CD8-positive, alpha-beta T cell (primary cell): ENCODE measurements at regions of chr20 and their contacts with region 1.

Region 1: GRCh38 chr20:43666376-43667328 is at the start of gene MYBL2:
- DNase-seq: peak; percentile 49 to 82 (median 66)
- ATAC-seq: peak; percentile 97
- H3K4me3 ChIP-seq: peak within 1 kb of the TSS; percentile 32 to 58
- H3K4me3 Mint-ChIP-seq: peak within 1 kb of the TSS; percentile 54
- H3K27ac ChIP-seq: no peak within 1 kb of the TSS
- H3K27ac Mint-ChIP-seq: no peak within 1 kb of the TSS
- H3K4me1 ChIP-seq: peaks cover 8% of the 10 kb centered on the region
- H3K4me1 Mint-ChIP-seq: peaks cover 2% of the 10 kb centered on the region
- H3K27me3 ChIP-seq: peaks cover 10 to 16% of the 10 kb centered on the region in 2 experiments
- H3K27me3 Mint-ChIP-seq: peaks cover 22% of the 10 kb centered on the region
- CTCF ChIP-seq: no peak
- total RNA-seq, gene MYBL2: 0.49 to 1.1 TPM

Region 2: GRCh38 chr20:43456809-43457639 is 209.6 kb before region 1 on chr20:
- CTCF ChIA-PET with region 1: no interaction called
- POLR2A ChIA-PET with region 1: no interaction called
- intact Hi-C with region 1: loop called (anchors 1 to 2 kb)
- DNase-seq: peak; percentile 68 to 94 (median 87)
- ATAC-seq: peak; percentile 79
- H3K4me3 ChIP-seq: peak overlapping the region; percentile 97 to 100
- H3K4me3 Mint-ChIP-seq: peak overlapping the region; percentile 92
- H3K27ac ChIP-seq: peak overlapping the region; percentile 98 to 100
- H3K27ac Mint-ChIP-seq: peak overlapping the region; percentile 98
- H3K4me1 ChIP-seq: peaks cover 16% of the 10 kb centered on the region
- H3K4me1 Mint-ChIP-seq: peaks cover 36% of the 10 kb centered on the region
- H3K27me3 ChIP-seq: no peaks in the 10 kb centered on the region
- H3K27me3 Mint-ChIP-seq: peaks cover 8% of the 10 kb centered on the region
- CTCF ChIP-seq: no peak

Region 3: DNA sequence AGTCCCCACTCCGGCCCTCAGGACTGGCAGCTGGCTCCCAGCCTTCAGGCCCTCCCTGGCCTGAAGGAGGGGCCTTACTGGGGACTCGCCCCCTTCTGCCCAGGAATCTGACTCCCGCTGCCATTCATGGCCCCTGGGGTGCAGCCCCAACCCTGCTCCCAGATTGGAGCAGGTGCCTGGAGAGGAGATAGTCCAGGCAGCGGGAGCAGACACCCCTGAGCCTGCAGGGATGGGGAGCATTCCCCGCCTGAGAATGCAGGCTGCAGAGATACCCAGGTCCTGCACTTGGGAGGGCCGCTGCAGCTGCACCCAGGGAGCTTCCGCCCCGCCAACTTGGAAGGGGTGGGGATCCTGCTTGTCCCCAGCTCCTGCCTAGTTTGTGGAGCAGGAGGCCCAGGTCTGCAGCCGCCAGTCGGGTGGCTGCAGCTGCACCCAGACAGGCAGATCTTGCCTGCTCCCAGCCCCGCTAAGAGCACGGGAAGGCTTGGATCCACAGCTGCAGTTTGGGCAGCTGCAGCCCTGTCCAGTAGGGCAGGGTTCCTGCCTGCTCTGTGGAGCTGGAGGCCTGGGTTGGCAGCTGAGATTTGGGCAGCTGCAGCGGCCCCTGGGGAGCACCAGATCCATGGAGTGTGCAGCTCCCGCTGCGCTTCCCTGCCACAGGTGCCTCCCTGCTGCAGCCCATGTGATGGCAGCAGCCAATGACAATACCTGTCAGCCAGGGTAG is 54.9 kb after region 1 on chr20:
- CTCF ChIA-PET with region 1: no interaction called
- POLR2A ChIA-PET with region 1: no interaction called
- intact Hi-C with region 1: loop called in 1 of 2 experiments (anchors 5 kb)
- DNase-seq: no peak
- ATAC-seq: no peak
- H3K4me3 ChIP-seq: peak overlapping the region; percentile 20 to 31
- H3K4me3 Mint-ChIP-seq: peak overlapping the region; percentile 48
- H3K27ac ChIP-seq: no peak overlapping the region
- H3K27ac Mint-ChIP-seq: peak overlapping the region; percentile 76
- H3K4me1 ChIP-seq: peaks cover 61% of the 10 kb centered on the region
- H3K4me1 Mint-ChIP-seq: peaks cover 61% of the 10 kb centered on the region
- H3K27me3 ChIP-seq: no peaks in the 10 kb centered on the region
- H3K27me3 Mint-ChIP-seq: no peaks in the 10 kb centered on the region
- CTCF ChIP-seq: no peak

Region 4: GRCh38 chr20:43914311-43915210 is 247.9 kb after region 1 on chr20 and contains the start of gene TOX2:
- CTCF ChIA-PET with region 1: no interaction called
- POLR2A ChIA-PET with region 1: no interaction called
- intact Hi-C with region 1: no loop called
- DNase-seq: peak in 8 of 9 experiments; percentile 24 to 65 (median 57)
- ATAC-seq: peak; percentile 72
- H3K4me3 ChIP-seq: peak within 1 kb of the TSS; percentile 18 to 32
- H3K4me3 Mint-ChIP-seq: peak within 1 kb of the TSS; percentile 84
- H3K27ac ChIP-seq: no peak within 1 kb of the TSS
- H3K27ac Mint-ChIP-seq: peak within 1 kb of the TSS; percentile 71
- H3K4me1 ChIP-seq: peaks cover 19% of the 10 kb centered on the region
- H3K4me1 Mint-ChIP-seq: peaks cover 18% of the 10 kb centered on the region
- H3K27me3 ChIP-seq: peaks cover 3 to 27% of the 10 kb centered on the region in 2 experiments
- H3K27me3 Mint-ChIP-seq: peaks cover 46% of the 10 kb centered on the region
- CTCF ChIP-seq: no peak
- total RNA-seq, gene TOX2: 1.7 to 1.8 TPM